BJ (cell line): ENCODE measurements at regions of chr7 and their contacts with region 1.

Region 1: GRCh38 chr7:149261829-149262617 is at the start of gene ZNF783:
- DNase-seq: peak; percentile 40
- H3K4me3 ChIP-seq: peak within 1 kb of the TSS; percentile 61
- H3K27me3 ChIP-seq: no peaks in the 10 kb centered on the region
- CTCF ChIP-seq: peak; percentile 47
- polyA plus RNA-seq, gene ZNF783: 5.9 and 6.9 TPM in 2 replicates

Region 2: DNA sequence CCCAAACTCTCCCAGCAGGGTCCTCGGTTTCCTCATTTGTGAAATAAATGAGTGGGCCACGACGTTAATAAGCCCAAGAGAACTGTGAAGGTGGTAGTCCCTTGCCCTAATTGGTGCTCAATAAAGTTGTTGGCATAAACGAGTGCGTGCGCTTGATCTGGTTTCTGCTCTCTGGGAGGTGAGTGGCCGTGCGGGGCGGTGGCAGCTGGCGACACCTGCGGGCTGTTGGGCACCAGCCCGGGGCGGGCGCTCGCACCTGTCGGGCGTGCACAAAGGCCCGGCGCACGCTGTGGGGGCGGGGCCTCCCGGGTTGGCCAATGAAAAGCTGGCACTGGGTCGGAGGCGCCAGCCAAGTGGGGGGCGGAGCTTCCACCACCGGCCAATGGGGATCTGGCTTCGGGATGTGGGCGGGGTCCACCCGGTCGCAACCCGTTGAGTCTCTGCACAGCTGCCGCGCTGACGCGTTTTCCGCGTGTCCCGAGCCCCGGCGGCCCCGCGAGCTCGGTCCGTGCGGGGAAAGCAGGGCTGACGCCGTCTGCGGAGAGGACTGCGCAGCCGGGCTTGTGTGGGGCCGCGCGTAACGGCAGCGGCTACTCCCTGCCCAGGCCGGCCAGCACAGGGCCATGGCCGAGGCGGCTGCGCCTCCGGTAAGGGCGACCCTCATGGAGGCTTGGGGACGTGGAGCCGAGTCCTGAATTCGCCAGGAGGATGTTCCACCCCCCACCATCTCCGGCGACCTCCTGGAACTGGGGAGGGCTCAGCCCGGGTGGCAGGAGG is 23.0 kb after region 1 on chr7:
- CTCF ChIA-PET with region 1: no interaction called
- POLR2A ChIA-PET with region 1: no interaction called
- DNase-seq: peak; percentile 26
- H3K4me3 ChIP-seq: peak overlapping the region; percentile 54
- H3K27me3 ChIP-seq: no peaks in the 10 kb centered on the region
- CTCF ChIP-seq: no peak

Region 3: DNA sequence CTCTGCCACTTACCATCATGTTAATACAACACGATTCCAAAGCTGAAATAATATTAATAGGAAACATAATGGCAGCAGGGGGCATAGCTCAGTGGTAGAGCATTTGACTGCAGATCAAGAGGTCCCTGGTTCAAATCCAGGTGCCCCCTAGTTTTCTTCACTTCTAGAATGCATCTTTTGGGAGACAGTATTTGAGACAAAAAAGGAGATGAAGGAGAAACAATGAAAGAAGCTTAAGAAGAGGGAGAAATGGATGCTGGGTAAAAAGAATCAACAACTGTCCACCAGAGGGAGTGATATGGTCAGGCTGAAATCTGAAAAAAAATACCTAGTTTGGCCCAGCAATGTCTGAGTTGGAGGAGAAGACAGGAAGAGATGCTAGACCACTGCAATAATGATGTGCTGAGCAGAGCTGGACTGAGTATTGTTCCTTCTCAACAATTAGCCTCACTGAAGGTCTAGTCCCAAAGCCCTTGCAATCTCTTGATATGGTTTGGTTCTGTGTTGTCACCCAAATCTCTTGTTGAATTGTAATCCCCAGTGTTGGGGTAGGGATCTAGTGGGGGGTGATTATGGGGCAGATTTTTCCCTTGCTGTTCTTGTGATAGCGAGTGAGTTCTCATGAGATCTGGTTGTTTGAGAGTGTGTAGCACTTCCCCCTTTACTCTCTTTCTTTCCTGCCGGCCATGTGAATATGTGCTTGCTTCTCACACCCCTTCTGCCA is 48.3 kb after region 1 on chr7:
- CTCF ChIA-PET with region 1: no interaction called
- POLR2A ChIA-PET with region 1: no interaction called
- DNase-seq: peak; percentile 22
- H3K4me3 ChIP-seq: no peak overlapping the region
- H3K27me3 ChIP-seq: peaks cover 2% of the 10 kb centered on the region
- CTCF ChIP-seq: peak; percentile 65

Region 4: GRCh38 chr7:151028131-151028947 is 1766.3 kb after region 1 on chr7 and contains the start of gene ABCB8:
- CTCF ChIA-PET with region 1: no interaction called
- POLR2A ChIA-PET with region 1: interaction called, 12 read pairs
- DNase-seq: peak; percentile 99
- H3K4me3 ChIP-seq: peak within 1 kb of the TSS; percentile 84
- H3K27me3 ChIP-seq: 0 out of 2 replicates have a peak, but pooled peaks cover 1% of the 10 kb centered on the region
- CTCF ChIP-seq: peak; percentile 50
- polyA plus RNA-seq, gene ABCB8: 13.0 and 23.6 TPM in 2 replicates